Activated naive CD4-positive, alpha-beta T cell treated with anti-CD3 and anti-CD28 coated beads for 36 hours (primary cell): ENCODE measurements at regions of chr11 and their contacts with region 1.

Region 1: DNA sequence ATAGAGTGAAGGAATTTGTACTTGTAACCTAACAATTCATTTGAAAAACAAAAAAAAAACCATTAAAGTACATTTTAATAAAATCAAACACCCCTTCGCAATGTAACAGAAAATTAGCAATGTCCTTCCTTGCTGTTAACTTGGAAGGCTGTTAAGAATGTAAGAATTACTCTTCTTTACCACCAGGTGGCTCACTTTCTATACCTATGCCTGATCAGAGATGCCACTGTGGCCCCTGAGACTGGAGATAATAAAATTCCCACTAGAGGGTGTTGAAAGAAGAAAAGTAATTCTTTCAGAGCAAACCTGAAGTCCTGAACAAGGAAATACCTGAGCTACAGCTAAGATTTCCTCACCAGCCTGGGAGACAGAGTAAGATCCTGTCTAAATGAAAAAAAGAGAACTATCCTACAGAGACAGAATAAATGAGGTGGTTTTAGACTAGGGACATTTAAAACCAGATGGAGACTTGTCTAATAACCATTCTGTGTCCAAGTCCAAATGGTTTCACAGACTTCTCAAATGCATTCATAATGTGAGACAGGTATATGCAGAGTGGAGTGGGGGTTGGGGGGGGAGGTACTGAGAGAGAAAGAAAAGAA is 1089.3 kb downstream of the FAM181B start:
- DNase-seq: peak; percentile 19
- H3K4me3 Mint-ChIP-seq: no peak overlapping the region
- H3K27ac Mint-ChIP-seq: no peak overlapping the region
- H3K4me1 Mint-ChIP-seq: no peaks in the 10 kb centered on the region
- H3K27me3 Mint-ChIP-seq: peaks cover 36% of the 10 kb centered on the region

Region 2: GRCh38 chr11:80970037-80970436 is 674.3 kb before region 1 on chr11:
- CTCF ChIA-PET with region 1: no interaction called
- intact Hi-C with region 1: no loop called
- DNase-seq: no peak
- H3K4me3 Mint-ChIP-seq: no peak overlapping the region
- H3K27ac Mint-ChIP-seq: no peak overlapping the region
- H3K4me1 Mint-ChIP-seq: no peaks in the 10 kb centered on the region
- H3K27me3 Mint-ChIP-seq: no peaks in the 10 kb centered on the region

Region 3: GRCh38 chr11:81963018-81963417 is 318.7 kb after region 1 on chr11:
- CTCF ChIA-PET with region 1: no interaction called
- intact Hi-C with region 1: loop called (anchors 1 kb)
- DNase-seq: no peak
- H3K4me3 Mint-ChIP-seq: no peak overlapping the region
- H3K27ac Mint-ChIP-seq: no peak overlapping the region
- H3K4me1 Mint-ChIP-seq: peaks cover 20% of the 10 kb centered on the region
- H3K27me3 Mint-ChIP-seq: no peaks in the 10 kb centered on the region

Region 4: GRCh38 chr11:82038153-82038552 is 393.8 kb after region 1 on chr11:
- CTCF ChIA-PET with region 1: interaction called, 4 read pairs
- intact Hi-C with region 1: loop called (anchors 1 kb)
- DNase-seq: no peak
- H3K4me3 Mint-ChIP-seq: no peak overlapping the region
- H3K27ac Mint-ChIP-seq: no peak overlapping the region
- H3K4me1 Mint-ChIP-seq: no peaks in the 10 kb centered on the region
- H3K27me3 Mint-ChIP-seq: no peaks in the 10 kb centered on the region

Region 5: DNA sequence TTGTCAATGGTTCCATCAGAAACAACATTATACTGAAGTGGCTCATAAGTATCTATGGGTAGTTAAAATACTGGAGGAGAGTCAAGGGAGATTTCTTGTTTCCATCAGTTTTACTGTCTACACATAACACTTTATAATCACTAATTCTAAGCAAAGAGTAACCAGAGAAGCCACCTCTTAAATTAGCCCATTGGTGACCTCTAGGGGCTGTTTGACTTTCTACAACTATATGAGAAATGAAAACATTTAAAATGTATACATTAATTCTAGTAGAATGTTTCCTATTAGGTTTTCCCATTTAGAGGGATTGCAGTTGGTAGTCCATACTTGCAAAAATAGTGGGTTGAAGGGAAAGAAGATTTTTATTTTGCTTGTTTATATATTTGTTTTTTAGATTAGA is 585.0 kb after region 1 on chr11:
- CTCF ChIA-PET with region 1: interaction called, 11 read pairs
- intact Hi-C with region 1: loop called (anchors 1 kb)
- DNase-seq: no peak
- H3K4me3 Mint-ChIP-seq: no peak overlapping the region
- H3K27ac Mint-ChIP-seq: no peak overlapping the region
- H3K4me1 Mint-ChIP-seq: no peaks in the 10 kb centered on the region
- H3K27me3 Mint-ChIP-seq: no peaks in the 10 kb centered on the region